ENCODE measurements at regions of chr15 and their contacts with region 1.

Region 1: GRCh38 chr15:79981831-79982455 is 10.9 kb upstream of the BCL2A1 start:
- DNase-seq: no peak
- ATAC-seq: no peak
- H3K4me3 ChIP-seq: no peak overlapping the region
- H3K27ac ChIP-seq: peak overlapping the region in 1 of 10 donors; percentile 87
- H3K4me1 ChIP-seq: peaks cover 0 to 57% (median 12%) of the 10 kb centered on the region in 9 donors
- H3K27me3 ChIP-seq: no peaks in the 10 kb centered on the region
- CTCF ChIP-seq: no peak

Region 2: DNA sequence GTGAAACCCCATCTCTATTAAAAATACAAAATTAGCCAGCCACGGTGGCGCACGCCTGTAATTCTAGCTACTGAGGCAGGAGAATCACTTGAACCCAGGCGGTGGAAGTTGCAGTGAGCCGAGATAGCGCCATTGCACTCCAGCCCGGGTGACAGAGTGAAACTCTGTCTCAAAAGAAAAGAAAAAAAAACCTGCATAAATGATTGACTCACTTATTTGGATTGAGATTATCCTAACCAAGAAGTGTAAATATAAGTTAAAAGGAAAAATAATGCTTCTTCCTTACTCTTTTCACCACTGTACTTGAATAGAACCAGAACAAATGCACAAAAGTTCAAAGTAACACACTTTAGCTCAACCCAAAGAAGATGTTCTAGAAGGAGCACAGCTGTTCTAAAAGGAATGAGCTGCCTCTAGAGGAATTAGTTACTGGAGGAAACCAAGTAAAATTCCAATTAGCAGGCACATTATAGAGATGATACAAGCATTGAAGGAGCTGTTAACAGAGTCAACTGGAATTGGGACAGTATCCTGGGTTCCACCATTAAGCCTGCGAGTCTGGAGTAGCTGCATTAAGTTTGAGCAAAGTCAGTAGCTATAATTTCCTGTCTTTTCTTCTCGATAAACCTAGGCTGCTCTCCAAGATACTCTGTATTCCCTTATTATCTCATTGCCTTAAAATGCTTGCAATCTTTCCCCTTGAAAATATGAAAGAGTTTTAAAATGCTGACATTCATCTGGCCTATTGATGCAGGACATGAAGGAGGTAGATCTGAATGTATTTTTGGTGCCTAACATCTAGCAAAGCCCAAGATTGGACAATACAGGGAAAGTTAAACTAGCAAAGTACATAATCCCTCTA is 94.7 kb before region 1 on chr15:
- intact Hi-C with region 1: loop called in 1 of 10 experiments (anchors 10 kb)
- DNase-seq: no peak
- ATAC-seq: no peak
- H3K4me3 ChIP-seq: no peak overlapping the region
- H3K27ac ChIP-seq: no peak overlapping the region
- H3K4me1 ChIP-seq: peaks cover 0 to 8% (median 0%) of the 10 kb centered on the region in 9 donors
- H3K27me3 ChIP-seq: no peaks in the 10 kb centered on the region
- CTCF ChIP-seq: no peak